Thyroid gland (tissue), 4 donors: ENCODE measurements at regions of chr7 and their contacts with region 1.

Region 1: DNA sequence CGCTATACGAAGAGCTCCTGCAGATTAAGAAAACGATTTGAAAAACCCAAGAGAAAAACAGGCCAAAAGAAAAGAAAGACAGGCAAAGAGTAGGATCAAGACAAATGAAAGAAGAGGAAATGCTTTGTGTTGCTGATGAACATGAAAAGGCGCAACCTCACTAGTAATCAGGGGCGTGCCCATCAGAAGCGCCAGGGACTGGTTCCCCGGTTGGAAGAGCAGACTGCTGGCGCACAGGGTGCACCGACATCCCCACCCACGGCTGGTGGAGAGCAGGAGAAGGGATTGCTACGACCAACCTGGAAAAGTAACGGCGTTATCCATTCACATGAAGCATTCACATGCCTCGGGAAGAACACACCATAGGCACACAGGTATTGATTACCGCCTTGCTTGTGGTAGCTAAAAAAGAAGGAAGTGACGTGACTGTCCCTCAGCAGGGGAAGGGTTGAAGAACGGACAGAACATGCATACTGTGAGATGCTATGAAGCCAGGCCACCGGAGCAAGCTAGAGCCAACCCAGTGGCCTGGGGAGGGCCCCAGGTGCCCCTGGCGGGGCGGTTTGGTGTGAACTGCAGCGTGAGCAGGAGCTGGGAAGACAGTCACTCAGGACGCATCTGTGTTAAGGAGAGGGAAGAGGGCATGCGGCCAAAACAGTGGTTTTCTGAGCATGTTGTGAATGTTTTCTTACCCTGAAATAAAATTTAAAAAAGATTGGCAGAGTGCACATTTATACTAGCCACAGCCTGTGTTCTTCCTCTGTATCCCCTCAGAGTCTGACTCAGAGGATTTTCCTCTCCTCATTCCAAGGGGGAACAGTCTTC is 18.3 kb downstream of the AGAP3 start:
- DNase-seq: no peak
- H3K4me3 ChIP-seq: no peak overlapping the region
- H3K27ac ChIP-seq: no peak overlapping the region
- H3K4me1 ChIP-seq: peaks cover 0 to 8% of the 10 kb centered on the region in 2 donors
- H3K27me3 ChIP-seq: no peaks in the 10 kb centered on the region
- CTCF ChIP-seq: no peak
- POLR2A ChIP-seq: no peak

Region 2: GRCh38 chr7:151032936-151033863 is 71.4 kb before region 1 on chr7:
- intact Hi-C with region 1: loop called (anchors 5 kb)
- DNase-seq: no peak
- H3K4me3 ChIP-seq: no peak overlapping the region
- H3K27ac ChIP-seq: no peak overlapping the region
- H3K4me1 ChIP-seq: peaks cover 5 to 10% of the 10 kb centered on the region in 2 donors
- H3K27me3 ChIP-seq: no peaks in the 10 kb centered on the region
- CTCF ChIP-seq: no peak
- POLR2A ChIP-seq: no peak